PC-3 (cell line): ENCODE measurements at regions of chr4 and their contacts with region 1.

Region 1: DNA sequence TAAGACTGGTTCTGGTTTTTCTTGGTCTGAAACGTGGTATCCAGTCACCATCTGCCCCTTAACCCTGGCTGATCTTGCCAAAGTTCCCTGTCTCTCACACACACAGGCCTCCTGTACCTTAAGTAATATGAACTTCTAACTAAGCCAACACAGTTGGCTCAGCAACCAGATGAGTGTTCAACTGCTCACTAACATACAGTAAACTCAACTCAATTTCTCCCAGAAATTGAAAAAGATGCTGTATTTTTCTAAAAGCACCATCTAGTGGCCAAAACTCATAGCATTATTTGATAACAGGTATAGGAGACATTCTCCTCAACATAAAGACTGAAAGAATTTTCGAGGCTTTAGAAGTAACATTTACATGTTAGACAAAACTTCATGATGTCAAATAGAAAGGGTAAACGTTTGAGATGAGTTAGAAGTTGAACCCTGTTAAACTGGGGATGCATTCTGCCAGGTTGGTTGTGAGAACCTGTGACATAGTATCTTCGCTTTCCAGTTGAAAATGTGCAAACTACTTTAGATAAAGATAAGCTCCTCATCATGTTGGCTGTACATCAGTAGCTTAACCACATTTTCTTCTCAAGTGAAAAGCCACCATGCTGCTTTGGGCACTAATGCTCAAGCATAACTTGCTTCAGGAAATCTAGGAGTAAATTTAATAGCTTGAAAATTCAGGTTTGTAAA is 31.2 kb downstream of the CCNI start:
- DNase-seq: peak; percentile 74
- ATAC-seq: peak; percentile 53
- H3K4me3 ChIP-seq: no peak overlapping the region
- H3K27ac ChIP-seq: no peak overlapping the region
- H3K4me1 ChIP-seq: peaks cover 13% of the 10 kb centered on the region
- H3K27me3 ChIP-seq: no peaks in the 10 kb centered on the region
- CTCF ChIP-seq: peak; percentile 71

Region 2: GRCh38 chr4:76430519-76431388 is 613.9 kb before region 1 on chr4:
- CTCF ChIA-PET with region 1: no interaction called
- POLR2A ChIA-PET with region 1: no interaction called
- intact Hi-C with region 1: loop called (anchors 5 kb)
- DNase-seq: peak; percentile 71
- ATAC-seq: peak; percentile 43
- H3K4me3 ChIP-seq: peak overlapping the region; percentile 37; the same call in 1 of the 2 replicates
- H3K27ac ChIP-seq: no peak overlapping the region
- H3K4me1 ChIP-seq: 0 out of 2 replicates have a peak, but pooled peaks cover 3% of the 10 kb centered on the region
- H3K27me3 ChIP-seq: no peaks in the 10 kb centered on the region
- CTCF ChIP-seq: peak; percentile 76

Region 3: GRCh38 chr4:76658231-76659102 is 386.1 kb before region 1 on chr4:
- CTCF ChIA-PET with region 1: no interaction called
- POLR2A ChIA-PET with region 1: no interaction called
- intact Hi-C with region 1: no loop called
- DNase-seq: peak; percentile 79
- ATAC-seq: peak; percentile 82
- H3K4me3 ChIP-seq: no peak overlapping the region
- H3K27ac ChIP-seq: peak overlapping the region; percentile 81
- H3K4me1 ChIP-seq: peaks cover 30% of the 10 kb centered on the region
- H3K27me3 ChIP-seq: no peaks in the 10 kb centered on the region
- CTCF ChIP-seq: no peak

Region 4: DNA sequence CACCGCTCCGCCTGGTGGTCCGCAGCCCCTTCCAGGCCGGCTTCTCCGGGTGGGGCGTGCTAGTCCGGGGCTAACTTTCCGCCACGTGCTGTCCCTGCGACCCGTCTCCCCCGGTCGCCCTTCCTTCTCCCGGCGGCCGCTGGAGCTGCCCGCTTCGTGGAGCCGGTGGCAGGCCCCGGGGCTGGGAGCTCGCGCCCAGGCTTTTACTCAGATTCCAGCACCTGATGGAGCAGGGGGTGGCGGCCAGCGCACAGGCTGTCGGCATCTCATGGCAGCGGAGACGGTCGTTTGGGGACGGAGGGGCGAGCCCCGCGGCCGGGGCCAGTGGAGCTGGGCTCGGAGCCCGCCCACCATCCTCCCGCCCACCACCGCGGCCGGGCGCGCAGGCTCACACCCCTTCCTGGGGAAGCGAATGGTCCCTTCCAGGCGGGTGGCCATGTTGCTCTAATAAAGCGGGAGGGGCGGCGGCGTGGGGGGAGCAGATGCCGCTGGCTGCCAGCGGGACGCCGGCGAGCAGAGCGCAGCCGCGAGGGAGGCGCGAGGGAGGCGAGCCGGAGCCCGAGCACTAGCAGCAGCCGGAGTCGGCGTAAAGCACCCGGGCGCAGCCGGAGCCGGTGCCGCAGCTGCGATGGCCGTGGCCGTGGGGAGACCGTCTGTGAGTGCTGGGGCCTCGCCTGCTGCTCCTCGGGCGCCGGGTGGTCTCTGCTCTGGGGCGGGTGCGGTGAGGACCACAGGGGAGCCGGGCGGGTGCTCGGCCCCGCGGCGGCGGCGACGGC is 95.1 kb before region 1 on chr4 and contains the start of gene SEPTIN11:
- CTCF ChIA-PET with region 1: no interaction called
- POLR2A ChIA-PET with region 1: no interaction called
- intact Hi-C with region 1: loop called (anchors 2 kb)
- DNase-seq: peak; percentile 84
- ATAC-seq: peak; percentile 65
- H3K4me3 ChIP-seq: peak within 1 kb of the TSS; percentile 86
- H3K27ac ChIP-seq: peak within 1 kb of the TSS; percentile 60
- H3K4me1 ChIP-seq: peaks cover 19% of the 10 kb centered on the region
- H3K27me3 ChIP-seq: no peaks in the 10 kb centered on the region
- CTCF ChIP-seq: no peak
- total RNA-seq, gene SEPTIN11: 39.0 and 46.0 TPM in 2 replicates

Region 5: GRCh38 chr4:76993787-76994641 is 50.6 kb before region 1 on chr4:
- CTCF ChIA-PET with region 1: no interaction called
- POLR2A ChIA-PET with region 1: no interaction called
- intact Hi-C with region 1: no loop called
- DNase-seq: no peak
- ATAC-seq: no peak
- H3K4me3 ChIP-seq: no peak overlapping the region
- H3K27ac ChIP-seq: no peak overlapping the region
- H3K4me1 ChIP-seq: no peaks in the 10 kb centered on the region
- H3K27me3 ChIP-seq: no peaks in the 10 kb centered on the region
- CTCF ChIP-seq: no peak

Region 6: GRCh38 chr4:77308843-77309242 is 264.2 kb after region 1 on chr4:
- CTCF ChIA-PET with region 1: no interaction called
- POLR2A ChIA-PET with region 1: no interaction called
- intact Hi-C with region 1: loop called (anchors 5 kb)
- DNase-seq: peak; percentile 67
- ATAC-seq: peak; percentile 83
- H3K4me3 ChIP-seq: no peak overlapping the region
- H3K27ac ChIP-seq: no peak overlapping the region
- H3K4me1 ChIP-seq: peaks cover 5% of the 10 kb centered on the region; the same call in 1 of the 2 replicates
- H3K27me3 ChIP-seq: peaks cover 6% of the 10 kb centered on the region; the same call in 1 of the 2 replicates
- CTCF ChIP-seq: peak; percentile 64

Region 7: GRCh38 chr4:78002261-78002660 is 957.7 kb after region 1 on chr4:
- CTCF ChIA-PET with region 1: no interaction called
- POLR2A ChIA-PET with region 1: no interaction called
- intact Hi-C with region 1: no loop called
- DNase-seq: no peak
- ATAC-seq: no peak
- H3K4me3 ChIP-seq: no peak overlapping the region
- H3K27ac ChIP-seq: no peak overlapping the region
- H3K4me1 ChIP-seq: no peaks in the 10 kb centered on the region
- H3K27me3 ChIP-seq: no peaks in the 10 kb centered on the region
- CTCF ChIP-seq: no peak